K562 (cell line): ENCODE measurements at regions of chr19 and their contacts with region 1.

Region 1: DNA sequence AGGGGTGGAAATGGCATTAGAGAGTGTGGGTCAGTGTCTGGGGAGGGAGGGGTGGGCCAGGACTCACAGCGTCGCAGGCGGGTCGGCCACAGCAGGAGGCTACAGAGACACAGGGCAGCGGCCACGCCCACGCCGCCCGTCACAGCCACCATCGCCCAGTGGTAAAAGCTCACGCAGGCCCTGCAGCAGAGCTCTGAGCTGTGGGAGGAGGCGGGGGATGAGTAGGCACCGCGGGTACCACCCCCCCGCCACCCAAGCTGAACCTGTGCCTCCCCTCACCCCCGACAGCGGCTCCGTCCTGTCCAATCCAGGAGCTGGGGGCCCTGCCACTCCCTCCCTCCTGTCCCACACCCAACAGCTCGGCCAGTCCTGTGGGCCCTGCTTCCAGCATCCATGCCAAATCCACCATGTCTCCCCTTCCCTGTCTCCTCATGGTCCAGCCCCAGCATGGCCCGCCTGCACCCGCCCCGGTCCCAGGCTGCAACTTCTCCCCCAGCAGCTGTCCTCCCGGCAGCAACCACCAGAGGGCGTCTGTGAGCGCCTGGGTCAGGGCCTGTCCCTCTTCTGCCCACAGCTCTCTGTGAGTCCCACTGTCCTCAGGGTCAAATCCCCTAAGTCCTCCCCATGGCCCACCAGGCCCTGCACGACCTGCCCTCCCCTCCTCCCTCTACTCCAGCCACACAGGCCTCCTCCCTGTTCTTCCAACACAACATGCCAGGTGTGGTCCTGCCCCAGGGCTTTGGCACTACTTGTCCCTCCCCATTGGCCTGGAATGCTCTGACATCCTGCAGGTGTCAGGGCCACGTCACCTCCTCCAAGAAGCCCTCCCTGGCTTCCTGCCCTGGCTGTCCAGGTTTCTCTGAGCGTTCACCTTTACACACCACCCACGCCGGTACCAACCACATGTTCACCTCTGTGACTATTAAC is 6.0 kb downstream of the TEKTIP1 start:
- DNase-seq: peak; percentile 81 to 85 (median 84)
- ATAC-seq: peak; percentile 93
- H3K4me3 ChIP-seq: no peak overlapping the region
- H3K27ac ChIP-seq: no peak overlapping the region
- H3K4me1 ChIP-seq: peaks cover 0 to 49% of the 10 kb centered on the region in 2 experiments; a peak in 3 of 5 replicates
- H3K27me3 ChIP-seq: no peaks in the 10 kb centered on the region
- CTCF ChIP-seq: peak; percentile 91 to 94 (median 94)
- EP300 ChIP-seq: no peak
- POLR2A ChIP-seq: no peak
- RAD21 ChIP-seq: peak; percentile 81 to 91

Region 2: GRCh38 chr19:3572132-3572854 is 27.3 kb after region 1 on chr19:
- CTCF ChIA-PET with region 1: interaction called, 4 read pairs
- POLR2A ChIA-PET with region 1: no interaction called
- in situ Hi-C with region 1: no loop called
- intact Hi-C with region 1: loop called (anchors 1 kb)
- DNase-seq: peak; percentile 93 to 100 (median 96)
- ATAC-seq: peak; percentile 92
- H3K4me3 ChIP-seq: peak overlapping the region; percentile 98
- H3K27ac ChIP-seq: no peak overlapping the region
- H3K4me1 ChIP-seq: peaks cover 25 to 62% of the 10 kb centered on the region in 2 experiments
- H3K27me3 ChIP-seq: no peaks in the 10 kb centered on the region
- CTCF ChIP-seq: no peak
- EP300 ChIP-seq: no peak; the same call in 1 of the 2 replicates
- POLR2A ChIP-seq: no peak
- RAD21 ChIP-seq: no peak

Region 3: GRCh38 chr19:3593156-3593555 is 48.2 kb after region 1 on chr19:
- CTCF ChIA-PET with region 1: no interaction called
- POLR2A ChIA-PET with region 1: no interaction called
- in situ Hi-C with region 1: no loop called
- intact Hi-C with region 1: no loop called
- DNase-seq: no peak
- ATAC-seq: no peak
- H3K4me3 ChIP-seq: no peak overlapping the region
- H3K27ac ChIP-seq: no peak overlapping the region
- H3K4me1 ChIP-seq: peaks cover 0 to 14% of the 10 kb centered on the region in 2 experiments; a peak in 1 of 5 replicates
- H3K27me3 ChIP-seq: no peaks in the 10 kb centered on the region
- CTCF ChIP-seq: no peak; a peak in 1 of 6 replicates
- EP300 ChIP-seq: no peak
- POLR2A ChIP-seq: no peak; the same call in 1 of the 2 replicates
- RAD21 ChIP-seq: no peak

Region 4: GRCh38 chr19:3606690-3607289 is 61.8 kb after region 1 on chr19 and contains the start of gene TBXA2R:
- CTCF ChIA-PET with region 1: no interaction called
- POLR2A ChIA-PET with region 1: interaction called, 3 read pairs
- in situ Hi-C with region 1: no loop called
- intact Hi-C with region 1: loop called (anchors 10 kb)
- DNase-seq: peak; percentile 91 to 94 (median 92)
- ATAC-seq: peak; percentile 89
- H3K4me3 ChIP-seq: peak within 1 kb of the TSS; percentile 89
- H3K27ac ChIP-seq: peak within 1 kb of the TSS; percentile 98
- H3K4me1 ChIP-seq: peaks cover 38 to 88% of the 10 kb centered on the region in 2 experiments
- H3K27me3 ChIP-seq: no peaks in the 10 kb centered on the region
- CTCF ChIP-seq: no peak
- EP300 ChIP-seq: no peak
- POLR2A ChIP-seq: peak; percentile 58
- RAD21 ChIP-seq: no peak
- polyA plus RNA-seq, gene TBXA2R: 1.5 to 2.6 TPM

Region 5: GRCh38 chr19:3618144-3618810 is 73.3 kb after region 1 on chr19:
- CTCF ChIA-PET with region 1: interaction called, 19 read pairs
- POLR2A ChIA-PET with region 1: no interaction called
- in situ Hi-C with region 1: no loop called
- intact Hi-C with region 1: no loop called
- DNase-seq: peak; percentile 79 to 93 (median 89)
- ATAC-seq: peak; percentile 93
- H3K4me3 ChIP-seq: no peak overlapping the region
- H3K27ac ChIP-seq: no peak overlapping the region
- H3K4me1 ChIP-seq: peaks cover 4 to 76% of the 10 kb centered on the region in 2 experiments
- H3K27me3 ChIP-seq: no peaks in the 10 kb centered on the region
- CTCF ChIP-seq: peak; percentile 87 to 95 (median 91)
- EP300 ChIP-seq: no peak
- POLR2A ChIP-seq: no peak
- RAD21 ChIP-seq: peak; percentile 88 to 96